ENCODE measurements at regions of chr15 and their contacts with region 1.

Region 1: DNA sequence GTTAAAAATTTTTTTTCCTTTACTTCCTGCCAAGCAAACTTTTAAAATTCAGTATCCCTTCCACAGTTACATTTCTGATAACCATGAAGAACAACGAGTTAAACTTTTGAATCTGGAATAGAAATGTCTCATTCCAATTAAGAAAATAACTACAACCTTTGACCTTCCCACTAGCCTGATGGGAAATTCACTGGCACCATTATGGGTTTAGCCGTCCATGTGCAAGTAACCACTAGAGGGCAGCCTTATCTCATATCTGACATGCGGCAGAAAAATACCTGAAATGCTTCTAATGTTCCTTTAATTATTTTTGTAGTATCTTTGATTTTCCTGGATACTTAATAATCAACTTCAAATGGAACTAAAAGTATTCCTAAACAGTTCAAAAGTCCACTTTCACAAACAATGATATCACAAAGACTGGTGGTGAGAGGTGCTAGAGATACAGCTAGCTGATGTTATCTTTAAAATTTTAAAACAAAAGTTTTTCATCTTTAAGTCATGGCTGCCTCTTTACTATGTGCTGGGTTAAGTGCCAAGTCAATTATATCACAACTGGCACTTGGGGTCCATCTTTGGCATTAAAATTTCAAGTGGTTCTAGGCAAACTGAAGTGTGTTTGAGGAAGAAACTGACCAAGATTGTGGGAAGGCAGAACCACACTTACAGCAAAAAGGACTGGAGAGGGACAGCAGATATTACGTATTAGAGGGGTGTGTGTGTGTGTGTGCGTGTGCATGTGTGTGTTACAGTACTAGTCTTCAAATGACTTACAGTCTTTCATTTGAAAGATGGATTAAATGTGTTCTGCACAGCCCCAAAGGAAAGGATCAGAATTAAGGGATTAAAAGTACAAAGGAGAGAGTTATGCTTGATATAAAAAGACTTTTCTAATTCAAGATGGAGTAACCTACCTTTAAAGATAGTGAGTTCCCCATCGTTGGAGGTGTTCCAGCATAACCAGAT is 107.1 kb upstream of the ICE2 start:
- DNase-seq: peak in 41 of 42 donors; percentile 5 to 87 (median 62)

Region 2: DNA sequence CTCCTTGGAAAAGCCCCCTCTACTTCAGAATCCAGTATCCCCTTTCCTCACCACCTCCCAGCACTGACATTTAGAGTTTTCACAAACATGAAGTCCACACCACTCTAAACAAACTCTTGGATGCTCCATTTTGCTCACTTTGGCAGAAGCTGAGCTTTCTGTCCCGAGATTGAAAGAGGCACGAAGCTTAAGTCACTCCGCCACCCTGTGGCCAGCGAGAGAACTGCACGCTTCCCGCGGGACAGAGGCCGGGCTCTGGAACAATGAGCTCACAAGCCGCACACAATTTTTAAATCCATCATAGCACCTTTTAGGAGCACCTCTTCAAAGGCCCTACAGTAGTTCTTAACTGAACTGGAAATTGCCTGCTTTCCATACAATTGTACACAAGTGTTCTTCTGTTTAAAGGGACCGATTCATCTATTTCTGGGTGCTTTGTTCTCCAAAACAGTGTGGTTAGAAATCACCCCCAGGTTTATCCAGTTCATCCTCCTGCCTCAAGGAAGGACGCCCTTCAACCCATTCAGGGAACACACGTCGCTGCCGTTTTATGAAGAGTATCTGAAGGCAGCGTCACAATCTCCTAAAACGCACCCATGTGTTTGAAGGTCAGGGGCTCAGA is 1248.2 kb after region 1 on chr15:
- intact Hi-C with region 1: loop called (anchors 5 kb)
- DNase-seq: peak; percentile 57 to 95 (median 89)